ENCODE measurements at regions of chr1 and their contacts with region 1.

Region 1: DNA sequence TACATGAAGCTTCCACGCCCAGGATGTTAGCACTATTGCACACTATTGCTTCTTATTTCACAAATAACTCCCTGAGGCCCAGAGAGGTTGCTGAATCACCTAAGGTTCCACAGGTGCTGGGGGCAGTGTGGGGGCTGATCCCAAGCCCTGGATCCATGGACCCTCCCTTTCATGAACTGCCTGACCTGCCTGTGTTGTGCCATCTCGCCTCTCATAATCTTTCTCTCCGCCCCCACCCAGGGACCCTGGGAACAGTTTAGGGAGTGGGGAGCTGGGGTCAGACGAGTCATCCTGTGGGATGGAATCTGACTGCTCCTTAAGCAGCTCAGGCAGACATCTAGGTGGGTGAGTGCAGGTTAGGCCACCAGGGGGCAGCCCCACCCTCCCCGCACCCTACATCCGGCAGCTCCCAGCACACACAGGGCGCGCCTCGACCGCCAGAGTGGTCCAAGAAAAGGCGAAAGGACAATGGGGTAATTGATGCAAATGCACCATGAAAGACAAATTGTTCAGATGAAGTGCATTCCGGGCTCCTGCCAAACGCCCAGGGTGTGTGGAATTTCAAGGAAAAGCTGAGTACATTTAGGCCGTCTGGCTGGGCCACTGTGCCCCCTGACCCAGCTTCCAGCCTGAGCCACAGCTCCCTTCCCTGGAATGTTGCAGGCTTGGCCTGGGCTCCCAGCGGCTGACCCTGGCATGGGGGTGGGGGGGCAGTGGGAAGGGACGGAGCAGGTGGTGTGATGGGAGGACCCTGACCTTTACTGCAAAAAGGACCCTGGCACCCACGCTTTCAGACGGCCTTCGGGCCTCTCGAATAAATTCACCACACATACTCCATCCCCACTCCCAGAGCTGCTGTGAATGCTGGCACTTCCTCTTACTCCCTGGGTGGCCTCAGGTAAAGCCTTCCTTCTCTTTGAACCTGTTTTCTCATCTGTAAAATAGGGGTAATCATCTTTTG is 20.8 kb downstream of the PHLDA3 start:
- DNase-seq: peak; percentile 97
- ATAC-seq: peak; percentile 97
- H3K4me3 ChIP-seq: no peak overlapping the region
- H3K27ac ChIP-seq: peak overlapping the region; percentile 27
- H3K4me1 ChIP-seq: peaks cover 29% of the 10 kb centered on the region
- H3K27me3 ChIP-seq: no peaks in the 10 kb centered on the region
- CTCF ChIP-seq: peak; percentile 100

Region 2: DNA sequence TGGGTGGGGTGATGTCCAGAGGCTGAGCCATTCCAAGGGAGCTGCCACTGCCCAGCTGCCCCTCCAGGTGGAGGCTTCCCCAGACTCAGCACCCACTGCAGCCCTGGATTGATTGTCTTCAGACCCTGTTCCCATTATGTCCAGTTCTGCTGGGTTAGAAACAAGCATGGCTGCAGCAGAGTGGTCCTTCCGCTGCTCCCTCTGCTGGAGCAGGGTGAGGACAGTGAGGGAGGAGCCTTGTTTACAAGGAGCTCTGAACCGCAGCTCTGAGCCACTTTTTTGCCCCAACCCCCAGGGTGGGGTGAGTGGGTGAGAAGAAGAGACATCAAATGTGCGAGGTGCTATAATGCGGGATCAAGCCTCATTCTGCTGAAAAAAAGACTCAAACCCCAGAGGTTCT is 73.0 kb before region 1 on chr1:
- CTCF ChIA-PET with region 1: no interaction called
- POLR2A ChIA-PET with region 1: no interaction called
- intact Hi-C with region 1: no loop called
- DNase-seq: peak; percentile 67
- ATAC-seq: peak; percentile 40
- H3K4me3 ChIP-seq: no peak overlapping the region
- H3K27ac ChIP-seq: no peak overlapping the region
- H3K4me1 ChIP-seq: peaks cover 6% of the 10 kb centered on the region
- H3K27me3 ChIP-seq: peaks cover 58% of the 10 kb centered on the region
- CTCF ChIP-seq: peak; percentile 77

Region 3: GRCh38 chr1:201421041-201421440 is 27.1 kb before region 1 on chr1:
- CTCF ChIA-PET with region 1: no interaction called
- POLR2A ChIA-PET with region 1: interaction called, 27 read pairs
- intact Hi-C with region 1: no loop called
- DNase-seq: no peak
- ATAC-seq: no peak
- H3K4me3 ChIP-seq: no peak overlapping the region
- H3K27ac ChIP-seq: no peak overlapping the region
- H3K4me1 ChIP-seq: no peaks in the 10 kb centered on the region
- H3K27me3 ChIP-seq: no peaks in the 10 kb centered on the region
- CTCF ChIP-seq: no peak

Region 4: DNA sequence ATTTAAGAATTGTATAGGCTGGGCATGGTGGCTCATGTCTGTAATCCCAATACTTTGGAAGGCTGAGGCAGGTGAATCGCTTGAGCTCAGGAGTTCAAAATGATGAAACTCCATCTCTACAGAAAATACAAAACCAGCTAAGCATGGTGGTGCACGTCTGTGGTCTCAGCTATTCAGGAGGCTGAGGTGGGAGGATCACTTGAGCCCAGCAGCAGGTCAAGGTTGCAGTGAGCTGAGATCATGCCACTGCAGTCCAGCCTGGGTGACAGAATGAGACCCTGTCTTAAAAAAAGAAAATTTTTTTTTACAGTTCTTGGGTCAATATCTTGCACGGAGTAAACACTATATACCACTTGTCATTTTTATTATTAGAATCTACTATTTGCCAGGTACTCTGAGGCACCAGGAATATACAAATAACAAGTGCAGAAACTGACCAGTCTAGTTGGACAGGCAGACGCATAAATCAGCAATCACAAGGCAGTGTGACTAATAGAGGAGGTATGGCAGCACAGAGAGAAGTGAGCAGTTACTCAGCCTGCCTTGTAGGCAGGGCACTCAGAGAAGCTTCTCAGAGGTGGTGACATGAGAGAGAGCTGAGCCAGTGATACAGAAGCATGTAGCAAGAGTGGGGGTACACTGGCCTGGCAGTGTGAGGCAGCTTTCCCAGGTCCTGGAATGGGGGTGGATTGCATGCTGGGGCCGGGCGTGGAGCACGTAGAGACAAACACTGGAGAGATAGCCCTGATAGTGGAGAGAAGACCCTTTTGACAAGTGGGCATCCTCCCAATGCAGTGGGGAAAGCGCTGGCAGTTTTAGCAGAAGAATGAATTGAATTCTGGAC is 12.8 kb after region 1 on chr1:
- CTCF ChIA-PET with region 1: interaction called, 21 read pairs
- POLR2A ChIA-PET with region 1: interaction called, 3 read pairs
- intact Hi-C with region 1: loop called (anchors 2 kb)
- DNase-seq: peak; percentile 100
- ATAC-seq: peak; percentile 86
- H3K4me3 ChIP-seq: peak overlapping the region; percentile 37
- H3K27ac ChIP-seq: peak overlapping the region; percentile 84
- H3K4me1 ChIP-seq: peaks cover 71% of the 10 kb centered on the region
- H3K27me3 ChIP-seq: no peaks in the 10 kb centered on the region
- CTCF ChIP-seq: no peak

Region 5: DNA sequence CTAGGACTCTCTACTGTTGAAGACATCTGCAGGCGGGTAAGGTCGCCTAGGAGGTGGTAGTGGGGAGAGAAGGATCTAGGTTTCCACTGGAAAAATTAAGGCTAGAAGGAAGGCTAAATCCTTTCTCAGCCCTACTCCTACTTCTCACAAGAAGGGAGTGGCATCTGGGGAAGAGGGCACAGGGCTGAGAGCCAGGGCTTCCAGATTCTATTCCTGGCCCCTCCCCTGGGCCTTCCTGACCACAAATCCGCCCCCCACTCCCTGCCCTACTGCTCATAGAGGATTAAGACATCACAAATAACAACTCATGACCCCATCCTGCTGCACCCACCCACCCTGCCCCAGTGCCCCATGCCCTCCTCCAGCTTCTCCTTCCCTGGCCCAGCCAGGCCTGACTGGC is 18.3 kb after region 1 on chr1:
- CTCF ChIA-PET with region 1: interaction called, 21 read pairs
- POLR2A ChIA-PET with region 1: interaction called, 3 read pairs
- intact Hi-C with region 1: loop called (anchors 2 kb)
- DNase-seq: peak; percentile 100
- ATAC-seq: peak; percentile 35
- H3K4me3 ChIP-seq: peak overlapping the region; percentile 70
- H3K27ac ChIP-seq: peak overlapping the region; percentile 84
- H3K4me1 ChIP-seq: peaks cover 60% of the 10 kb centered on the region
- H3K27me3 ChIP-seq: no peaks in the 10 kb centered on the region
- CTCF ChIP-seq: no peak

Region 6: DNA sequence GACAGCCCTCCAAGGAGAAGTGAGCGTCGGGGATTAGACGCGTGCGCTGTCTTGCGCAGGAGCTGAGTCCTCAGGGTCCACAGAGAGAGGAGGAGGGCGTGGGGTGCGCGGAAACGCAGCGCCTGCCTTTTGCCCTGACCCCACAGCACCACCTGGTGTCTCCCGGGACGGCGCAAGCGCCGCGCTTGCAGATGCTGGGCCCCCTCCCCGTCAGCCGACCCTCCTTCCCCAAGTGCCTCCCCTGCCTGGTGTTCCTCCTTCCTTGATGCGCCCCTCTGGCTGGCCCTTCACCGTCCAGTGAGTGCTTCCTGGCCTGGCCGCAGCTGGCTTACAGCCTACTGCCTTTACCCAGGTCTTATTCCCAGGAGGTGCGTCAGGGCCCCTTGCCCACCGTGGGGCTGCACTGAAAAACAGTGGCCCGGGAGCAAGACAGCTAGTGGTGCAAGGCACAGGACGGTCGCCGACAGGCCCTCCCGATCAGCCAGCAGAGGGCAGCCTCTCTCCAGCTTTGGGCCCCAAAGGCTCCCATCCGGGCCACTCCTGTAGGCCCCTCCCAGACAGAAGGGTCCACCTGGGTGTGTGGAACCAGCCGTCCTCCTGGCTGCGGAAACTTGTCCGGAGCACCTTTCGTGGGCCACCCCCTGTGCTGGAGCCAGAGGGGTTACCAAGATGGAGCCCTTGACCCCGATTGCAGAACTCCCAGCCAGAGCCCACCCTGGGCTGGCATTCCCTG is 33.7 kb after region 1 on chr1:
- CTCF ChIA-PET with region 1: interaction called, 40 read pairs
- POLR2A ChIA-PET with region 1: interaction called, 11 read pairs
- intact Hi-C with region 1: loop called (anchors 1 kb)
- DNase-seq: peak; percentile 76
- ATAC-seq: peak; percentile 68
- H3K4me3 ChIP-seq: no peak overlapping the region
- H3K27ac ChIP-seq: no peak overlapping the region
- H3K4me1 ChIP-seq: peaks cover 17% of the 10 kb centered on the region
- H3K27me3 ChIP-seq: no peaks in the 10 kb centered on the region
- CTCF ChIP-seq: peak; percentile 85

Region 7: DNA sequence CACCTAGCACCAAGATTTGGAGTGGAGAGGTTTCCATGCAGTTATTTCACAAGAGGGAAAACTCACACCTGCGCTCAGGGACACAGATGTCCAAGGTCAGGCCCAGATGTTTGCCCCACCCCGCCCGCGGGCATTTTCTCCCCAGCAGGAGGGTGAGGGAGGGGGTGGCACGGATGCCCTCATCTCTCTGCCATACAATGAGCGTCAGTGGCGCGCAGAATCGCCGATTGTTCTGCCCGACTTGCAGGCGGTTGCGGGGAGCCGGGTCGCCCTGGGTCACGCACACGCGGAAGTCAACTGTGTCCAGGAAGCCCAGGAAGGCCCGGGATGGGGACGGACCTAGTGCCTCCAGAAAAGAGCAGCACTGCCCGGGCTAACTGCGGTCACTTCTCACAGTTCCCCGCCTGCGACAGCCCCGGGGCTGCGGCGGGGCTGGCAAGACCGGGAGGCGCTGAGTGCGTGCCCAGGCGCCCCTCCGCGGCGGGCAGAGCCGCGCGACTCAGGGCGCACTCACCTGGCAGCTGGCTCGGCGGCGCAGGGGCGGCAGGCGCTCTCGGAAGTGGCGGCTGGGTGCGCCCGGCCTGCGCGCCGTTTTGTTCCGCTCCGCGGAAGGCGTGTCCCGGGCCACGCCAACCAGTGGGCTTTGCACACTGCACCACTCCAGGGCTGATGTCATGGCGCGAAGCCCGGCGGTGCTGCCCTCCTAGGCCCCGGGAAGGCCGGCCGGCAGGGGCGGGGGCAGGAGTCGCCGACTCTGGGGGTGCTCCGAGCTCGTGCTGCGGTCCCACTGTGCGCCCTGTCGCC is 58.6 kb after region 1 on chr1 and contains the start of gene CSRP1:
- CTCF ChIA-PET with region 1: interaction called, 18 read pairs
- POLR2A ChIA-PET with region 1: interaction called, 15 read pairs
- intact Hi-C with region 1: no loop called
- DNase-seq: peak; percentile 74
- ATAC-seq: peak; percentile 48
- H3K4me3 ChIP-seq: peak within 1 kb of the TSS; percentile 76
- H3K27ac ChIP-seq: peak within 1 kb of the TSS; percentile 89
- H3K4me1 ChIP-seq: peaks cover 80% of the 10 kb centered on the region
- H3K27me3 ChIP-seq: no peaks in the 10 kb centered on the region
- CTCF ChIP-seq: no peak
- total RNA-seq, gene CSRP1: 147 and 189 TPM in 2 replicates

Region 8: GRCh38 chr1:201511941-201512539 is 63.8 kb after region 1 on chr1:
- CTCF ChIA-PET with region 1: interaction called, 18 read pairs
- POLR2A ChIA-PET with region 1: no interaction called
- intact Hi-C with region 1: loop called (anchors 1 kb)
- DNase-seq: peak; percentile 16
- ATAC-seq: peak; percentile 9
- H3K4me3 ChIP-seq: no peak overlapping the region
- H3K27ac ChIP-seq: peak overlapping the region; percentile 48
- H3K4me1 ChIP-seq: peaks cover 67% of the 10 kb centered on the region
- H3K27me3 ChIP-seq: no peaks in the 10 kb centered on the region
- CTCF ChIP-seq: no peak